ENCODE measurements at regions of chr11 and their contacts with region 1.

Region 1: DNA sequence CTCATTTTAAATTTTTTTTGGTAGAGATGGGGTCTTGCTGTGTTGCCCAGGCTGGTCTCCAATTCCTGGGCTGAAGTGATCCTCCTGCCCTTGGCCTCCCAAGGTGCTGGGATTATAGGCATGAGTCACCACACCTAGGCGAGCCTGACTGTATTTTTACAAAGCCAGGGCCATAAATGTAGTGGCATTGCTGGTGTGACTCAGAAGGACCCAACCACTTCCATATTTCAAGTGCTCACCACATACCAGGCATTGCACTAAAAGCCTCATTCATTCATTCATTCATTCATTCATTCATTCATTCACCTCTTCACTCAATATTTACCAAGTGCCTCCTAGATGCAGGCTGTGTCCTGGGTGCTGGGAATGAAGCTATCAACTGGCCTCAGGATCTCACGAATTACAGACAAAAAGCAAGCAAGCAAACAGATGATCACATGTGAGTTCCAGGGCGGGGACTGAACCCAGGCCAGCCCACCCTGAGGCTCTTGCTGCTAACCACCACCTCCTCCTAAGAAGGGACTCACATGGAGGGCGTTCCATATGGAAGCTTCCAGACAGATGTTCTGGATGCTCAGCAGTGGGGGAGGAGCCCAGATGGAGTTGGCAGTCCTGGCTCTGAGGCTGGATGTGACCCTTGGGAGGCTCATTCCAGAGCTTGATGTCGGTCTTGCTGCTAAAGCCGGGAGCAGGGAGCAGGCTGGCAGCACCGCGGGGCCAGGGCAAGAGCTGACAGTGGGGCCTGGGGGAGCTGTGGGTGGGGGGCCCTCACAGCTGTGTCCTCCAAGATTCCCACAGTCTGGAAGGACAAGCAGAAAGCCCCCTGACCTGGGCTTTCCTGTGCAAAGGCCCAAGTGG is 158.8 kb downstream of the CTTN start:
- DNase-seq: peak; percentile 89
- ATAC-seq: peak; percentile 94
- H3K4me3 ChIP-seq: 0 out of 4 replicates have a peak overlapping the region, but pooled peaks of 1 of the 2 experiments have one; percentile 16
- H3K27ac ChIP-seq: peak overlapping the region; percentile 28; the same call in 1 of the 2 replicates
- H3K4me1 ChIP-seq: peaks cover 14 to 29% of the 10 kb centered on the region in 2 experiments
- H3K27me3 ChIP-seq: no peaks in the 10 kb centered on the region
- CTCF ChIP-seq: no peak
- POLR2A ChIP-seq: no peak
- RAD21 ChIP-seq: 0 out of 2 replicates have a peak, but pooled peaks have one; percentile 14

Region 2: DNA sequence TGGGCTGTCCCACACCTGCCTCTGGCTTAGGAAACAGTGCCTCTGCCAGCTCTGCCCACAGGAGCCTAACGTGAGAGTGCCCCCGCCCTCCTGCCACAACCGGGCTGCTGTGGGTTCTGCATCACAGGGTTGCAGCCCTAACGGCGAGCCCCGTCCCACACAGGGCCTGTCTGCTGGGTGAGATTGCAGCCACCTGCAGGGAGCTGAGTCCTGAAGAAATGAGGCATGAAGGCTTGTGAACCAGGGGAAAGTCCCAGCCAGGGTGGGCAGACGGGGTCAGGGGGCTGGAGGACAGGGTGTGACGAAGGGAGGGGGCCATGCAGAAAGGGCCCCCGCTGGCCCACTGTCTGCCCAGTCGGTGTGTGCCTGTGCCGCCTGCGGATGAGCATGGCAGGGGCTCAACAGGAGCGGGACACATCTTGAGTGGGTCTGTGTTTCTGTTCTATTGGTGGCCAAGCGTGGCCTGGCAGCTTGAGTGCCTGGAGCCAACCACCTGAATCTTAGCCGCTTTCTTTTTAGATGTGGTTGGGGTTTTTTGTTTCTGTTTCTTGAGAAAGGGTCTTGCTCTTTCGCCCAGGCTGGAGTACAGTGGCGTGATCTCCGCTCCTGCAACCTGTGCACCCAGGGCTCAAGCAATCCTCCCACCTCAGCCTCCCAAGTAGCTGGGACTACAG is 119.9 kb before region 1 on chr11:
- CTCF ChIA-PET with region 1: no interaction called
- POLR2A ChIA-PET with region 1: no interaction called
- RAD21 ChIA-PET with region 1: no interaction called
- intact Hi-C with region 1: no loop called
- DNase-seq: no peak
- ATAC-seq: 0 out of 2 replicates have a peak, but pooled peaks have one; percentile 16
- H3K4me3 ChIP-seq: no peak overlapping the region
- H3K27ac ChIP-seq: no peak overlapping the region
- H3K4me1 ChIP-seq: no peaks in the 10 kb centered on the region
- H3K27me3 ChIP-seq: no peaks in the 10 kb centered on the region
- CTCF ChIP-seq: no peak
- POLR2A ChIP-seq: no peak
- RAD21 ChIP-seq: no peak

Region 3: GRCh38 chr11:70483077-70483861 is 73.8 kb before region 1 on chr11:
- CTCF ChIA-PET with region 1: no interaction called
- POLR2A ChIA-PET with region 1: interaction called, 4 read pairs
- RAD21 ChIA-PET with region 1: no interaction called
- intact Hi-C with region 1: loop called (anchors 5 kb)
- DNase-seq: peak; percentile 60
- ATAC-seq: peak; percentile 72
- H3K4me3 ChIP-seq: peak overlapping the region; percentile 15 to 48
- H3K27ac ChIP-seq: peak overlapping the region; percentile 68
- H3K4me1 ChIP-seq: peaks cover 26 to 39% of the 10 kb centered on the region in 2 experiments
- H3K27me3 ChIP-seq: no peaks in the 10 kb centered on the region
- CTCF ChIP-seq: peak; percentile 45 to 69 (median 68); a peak in 5 of 6 replicates
- POLR2A ChIP-seq: no peak
- RAD21 ChIP-seq: peak; percentile 56

Measured in HCT116 (cell line).